ENCODE measurements at regions of chr4 and their contacts with region 1.

Region 1: DNA sequence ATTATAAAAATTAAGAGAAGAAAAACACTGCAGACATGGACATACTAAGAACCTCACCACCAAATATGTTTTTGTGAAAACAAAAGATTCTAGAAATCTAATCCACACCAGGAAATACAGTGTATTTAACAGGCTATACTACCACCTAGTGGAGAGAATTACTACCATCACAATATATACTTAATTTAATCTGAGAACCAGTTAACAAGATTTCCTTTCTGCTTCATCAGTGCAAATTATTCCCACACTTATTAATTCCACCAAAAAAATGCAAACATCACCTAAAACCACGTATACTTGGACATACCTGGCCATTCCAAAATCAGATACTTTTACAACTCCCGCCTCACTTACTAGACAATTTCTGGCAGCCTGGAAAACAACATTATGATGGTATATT is 7.0 kb upstream of the TXK start:
- DNase-seq: peak in 1 of 35 experiments; percentile 72
- ATAC-seq: peak in 1 of 4 experiments; percentile 20
- H3K4me3 ChIP-seq: no peak overlapping the region
- H3K4me3 Mint-ChIP-seq: no peak overlapping the region
- H3K27ac ChIP-seq: no peak overlapping the region
- H3K27ac Mint-ChIP-seq: no peak overlapping the region
- H3K4me1 ChIP-seq: peaks cover 39 to 46% of the 10 kb centered on the region in 2 experiments
- H3K4me1 Mint-ChIP-seq: peaks cover 50 to 53% (median 51%) of the 10 kb centered on the region in 3 donors
- H3K27me3 ChIP-seq: no peaks in the 10 kb centered on the region
- H3K27me3 Mint-ChIP-seq: no peaks in the 10 kb centered on the region

Region 2: GRCh38 chr4:47882228-47882627 is 258.8 kb before region 1 on chr4:
- CTCF ChIA-PET with region 1: no interaction called
- POLR2A ChIA-PET with region 1: interaction called in 1 of 2 experiments, 12 read pairs
- DNase-seq: no peak
- ATAC-seq: no peak
- H3K4me3 ChIP-seq: no peak overlapping the region
- H3K4me3 Mint-ChIP-seq: no peak overlapping the region
- H3K27ac ChIP-seq: no peak overlapping the region
- H3K27ac Mint-ChIP-seq: no peak overlapping the region
- H3K4me1 ChIP-seq: no peaks in the 10 kb centered on the region
- H3K4me1 Mint-ChIP-seq: peaks cover 0 to 6% (median 0%) of the 10 kb centered on the region in 3 donors
- H3K27me3 ChIP-seq: no peaks in the 10 kb centered on the region
- H3K27me3 Mint-ChIP-seq: no peaks in the 10 kb centered on the region

Region 3: DNA sequence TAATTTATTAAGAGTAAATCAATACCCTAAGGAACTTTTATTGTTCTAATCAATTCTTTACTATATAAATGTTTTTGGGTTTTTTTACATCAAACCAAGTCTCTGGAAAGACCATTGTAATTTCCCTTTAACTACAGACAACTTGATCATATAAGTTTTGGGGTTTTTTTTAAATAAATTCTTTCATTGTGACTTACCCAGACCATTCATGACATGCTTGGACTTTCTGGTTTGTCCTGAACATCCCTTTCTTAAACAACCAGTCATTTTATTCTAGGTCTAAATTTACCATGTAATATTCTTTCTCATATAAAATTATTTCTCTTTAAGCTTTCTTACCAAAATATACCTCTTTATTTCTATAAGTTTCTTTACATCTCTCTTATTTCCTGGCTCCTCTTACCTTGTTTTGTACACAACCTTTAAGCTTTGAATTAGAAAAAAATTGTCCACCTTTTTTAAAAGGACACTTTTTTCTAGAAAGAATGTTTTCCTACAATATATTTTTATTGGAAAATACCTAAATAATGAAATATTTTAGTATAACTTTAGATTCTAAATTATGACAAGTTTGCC is 132.9 kb before region 1 on chr4:
- CTCF ChIA-PET with region 1: interaction called in 1 of 2 experiments, 13 read pairs
- POLR2A ChIA-PET with region 1: no interaction called
- DNase-seq: no peak
- ATAC-seq: no peak
- H3K4me3 ChIP-seq: no peak overlapping the region
- H3K4me3 Mint-ChIP-seq: no peak overlapping the region
- H3K27ac ChIP-seq: no peak overlapping the region
- H3K27ac Mint-ChIP-seq: no peak overlapping the region
- H3K4me1 ChIP-seq: no peaks in the 10 kb centered on the region
- H3K4me1 Mint-ChIP-seq: no peaks in the 10 kb centered on the region
- H3K27me3 ChIP-seq: peaks cover 0 to 10% of the 10 kb centered on the region in 2 experiments
- H3K27me3 Mint-ChIP-seq: peaks cover 3 to 11% of the 10 kb centered on the region in 2 donors

Region 4: DNA sequence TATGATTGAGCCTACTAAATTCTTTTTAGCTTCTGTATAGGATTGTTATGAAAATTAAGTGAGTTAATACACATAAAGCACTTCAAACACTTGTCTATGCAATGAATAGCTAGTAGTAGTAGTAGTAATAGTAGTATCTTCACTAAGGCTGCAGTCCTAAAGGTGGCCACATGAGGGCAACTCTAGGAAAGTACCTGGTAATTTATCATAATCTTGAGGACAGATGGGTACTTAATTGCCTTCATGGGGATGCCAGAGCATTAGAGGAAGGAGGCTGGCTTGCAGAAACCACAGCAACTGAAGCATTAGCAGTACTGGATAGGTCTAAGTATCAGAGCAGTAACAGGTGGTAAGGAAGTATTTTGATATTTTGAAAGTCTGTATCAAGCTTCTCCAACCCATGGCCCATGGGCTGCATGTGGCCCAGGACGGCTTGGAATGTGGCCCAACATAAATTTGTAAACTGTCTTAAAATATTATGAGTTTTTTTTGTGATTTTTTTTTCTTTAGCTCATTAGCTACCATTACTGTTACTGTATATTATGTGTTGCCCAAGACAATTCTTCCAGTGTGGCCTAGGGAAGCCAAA is 107.1 kb before region 1 on chr4:
- CTCF ChIA-PET with region 1: interaction called, 3 to 23 read pairs
- POLR2A ChIA-PET with region 1: no interaction called
- DNase-seq: peak in 34 of 35 experiments; percentile 28 to 74 (median 53)
- ATAC-seq: peak; percentile 75 to 85 (median 82)
- H3K4me3 ChIP-seq: no peak overlapping the region
- H3K4me3 Mint-ChIP-seq: no peak overlapping the region
- H3K27ac ChIP-seq: no peak overlapping the region
- H3K27ac Mint-ChIP-seq: no peak overlapping the region
- H3K4me1 ChIP-seq: peaks cover 0 to 4% of the 10 kb centered on the region in 2 experiments
- H3K4me1 Mint-ChIP-seq: peaks cover 6 to 20% (median 12%) of the 10 kb centered on the region in 3 donors
- H3K27me3 ChIP-seq: no peaks in the 10 kb centered on the region
- H3K27me3 Mint-ChIP-seq: no peaks in the 10 kb centered on the region

Region 5: GRCh38 chr4:48100256-48100655 is 40.8 kb before region 1 on chr4:
- CTCF ChIA-PET with region 1: interaction called, 4 to 11 read pairs
- POLR2A ChIA-PET with region 1: no interaction called
- DNase-seq: no peak
- ATAC-seq: no peak
- H3K4me3 ChIP-seq: no peak overlapping the region
- H3K4me3 Mint-ChIP-seq: no peak overlapping the region
- H3K27ac ChIP-seq: no peak overlapping the region
- H3K27ac Mint-ChIP-seq: peak overlapping the region; percentile 22 to 31
- H3K4me1 ChIP-seq: peaks cover 2 to 3% of the 10 kb centered on the region in 2 experiments
- H3K4me1 Mint-ChIP-seq: peaks cover 18 to 27% (median 23%) of the 10 kb centered on the region in 3 donors
- H3K27me3 ChIP-seq: no peaks in the 10 kb centered on the region
- H3K27me3 Mint-ChIP-seq: no peaks in the 10 kb centered on the region

Region 6: DNA sequence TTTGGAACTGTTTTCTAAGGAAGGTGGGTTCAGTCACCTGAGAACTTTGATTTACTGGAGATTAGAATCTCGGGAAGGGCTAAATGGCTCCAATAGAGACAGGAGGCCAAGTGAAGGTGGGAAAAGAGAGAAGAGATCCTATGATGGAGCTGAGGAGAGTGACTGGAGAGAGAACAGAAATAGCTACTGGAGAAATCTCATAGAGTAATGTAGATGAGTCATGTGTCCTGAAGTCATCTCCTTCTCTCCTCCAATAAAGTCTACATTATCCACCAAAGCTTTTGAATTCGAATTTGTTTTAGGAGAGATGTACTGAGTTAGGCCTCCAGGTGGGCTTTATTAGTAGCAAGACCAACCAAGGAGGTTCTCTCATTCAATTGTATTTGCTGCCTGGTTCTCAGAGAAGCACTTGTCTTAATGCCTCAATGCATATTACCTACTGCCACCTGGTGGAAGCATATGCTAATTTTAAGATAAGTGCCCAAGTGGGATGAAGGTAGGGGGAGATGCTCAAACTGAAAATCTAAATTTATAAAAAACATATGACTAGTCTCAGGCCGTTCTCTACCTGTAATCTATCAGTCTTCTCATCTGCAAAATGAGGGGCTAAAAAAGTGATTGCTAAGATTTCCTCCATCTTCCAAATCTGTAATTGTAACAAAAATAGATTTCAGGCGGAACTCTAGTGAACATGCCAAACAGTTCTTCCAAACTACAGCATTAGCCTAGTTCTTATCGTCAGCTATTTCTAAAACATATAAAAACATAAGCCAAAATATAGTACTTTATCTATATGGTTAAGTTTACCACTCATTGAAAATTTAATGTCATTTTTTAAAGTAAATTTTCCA is 31.4 kb before region 1 on chr4:
- CTCF ChIA-PET with region 1: interaction called, 15 to 24 read pairs
- POLR2A ChIA-PET with region 1: interaction called in 1 of 2 experiments, 3 read pairs
- DNase-seq: peak in 8 of 35 experiments; percentile 16 to 73 (median 24)
- ATAC-seq: peak; percentile 73 to 82 (median 80)
- H3K4me3 ChIP-seq: no peak overlapping the region
- H3K4me3 Mint-ChIP-seq: no peak overlapping the region
- H3K27ac ChIP-seq: no peak overlapping the region
- H3K27ac Mint-ChIP-seq: peak overlapping the region; percentile 3 to 6
- H3K4me1 ChIP-seq: peaks cover 4 to 9% of the 10 kb centered on the region in 2 experiments
- H3K4me1 Mint-ChIP-seq: peaks cover 45 to 61% (median 47%) of the 10 kb centered on the region in 3 donors
- H3K27me3 ChIP-seq: no peaks in the 10 kb centered on the region
- H3K27me3 Mint-ChIP-seq: no peaks in the 10 kb centered on the region

Region 7: GRCh38 chr4:48127682-48128394 is 13.2 kb before region 1 on chr4:
- CTCF ChIA-PET with region 1: interaction called, 16 to 77 read pairs
- POLR2A ChIA-PET with region 1: interaction called, 3 to 7 read pairs
- DNase-seq: peak in 34 of 35 experiments; percentile 43 to 80 (median 64)
- ATAC-seq: peak; percentile 64 to 88 (median 72)
- H3K4me3 ChIP-seq: peak overlapping the region; percentile 6 to 42
- H3K4me3 Mint-ChIP-seq: peak overlapping the region; percentile 73 to 88 (median 76)
- H3K27ac ChIP-seq: peak overlapping the region; percentile 80
- H3K27ac Mint-ChIP-seq: peak overlapping the region; percentile 98 to 99
- H3K4me1 ChIP-seq: peaks cover 63 to 68% of the 10 kb centered on the region in 2 experiments
- H3K4me1 Mint-ChIP-seq: peaks cover 90 to 93% (median 92%) of the 10 kb centered on the region in 3 donors
- H3K27me3 ChIP-seq: no peaks in the 10 kb centered on the region
- H3K27me3 Mint-ChIP-seq: no peaks in the 10 kb centered on the region

Region 8: DNA sequence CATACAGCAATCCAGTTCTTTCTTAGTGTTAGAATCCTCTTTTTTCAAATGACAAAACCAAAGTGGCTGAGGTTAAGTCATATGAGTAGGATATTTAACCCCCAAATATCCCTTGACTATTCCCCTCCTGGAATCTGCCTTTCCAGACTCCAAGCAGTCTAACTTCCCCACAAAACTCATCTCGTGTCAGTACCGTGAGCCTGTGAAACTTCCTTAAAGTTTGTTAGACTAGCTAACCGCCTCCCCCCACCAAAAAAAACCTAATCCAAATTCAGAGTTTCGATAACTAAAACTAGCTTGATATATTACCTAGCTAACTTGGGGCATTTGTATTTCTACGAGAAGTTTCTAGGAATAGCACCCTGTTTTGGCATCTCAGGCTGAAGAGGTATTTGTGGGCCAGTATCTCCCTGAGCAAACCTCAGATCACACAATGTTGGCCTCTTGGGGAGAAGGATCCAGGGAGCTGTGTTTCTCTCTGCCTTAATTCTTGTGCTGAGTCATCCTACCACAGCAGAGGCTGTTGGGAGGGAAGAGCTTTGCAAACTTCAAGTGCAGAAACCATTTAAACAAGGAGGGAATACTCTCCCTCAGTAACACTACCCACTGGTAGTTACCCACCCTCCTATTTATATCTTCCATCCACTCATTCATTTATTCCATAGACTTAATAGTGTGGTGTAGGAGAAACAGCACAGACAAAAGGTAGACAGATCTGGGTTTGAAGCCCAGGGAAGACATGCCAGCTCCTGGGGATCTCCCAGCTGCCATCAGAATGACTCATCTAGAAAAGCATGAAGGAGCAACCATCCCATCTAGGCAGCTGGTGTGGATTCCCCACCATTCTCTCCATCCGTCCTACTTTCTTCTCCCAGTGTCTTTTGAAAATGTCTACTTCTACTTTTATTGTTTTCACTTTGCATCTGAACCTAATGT is 32.3 kb after region 1 on chr4:
- CTCF ChIA-PET with region 1: no interaction called
- POLR2A ChIA-PET with region 1: no interaction called
- DNase-seq: no peak
- ATAC-seq: no peak
- H3K4me3 ChIP-seq: no peak overlapping the region
- H3K4me3 Mint-ChIP-seq: no peak overlapping the region
- H3K27ac ChIP-seq: no peak overlapping the region
- H3K27ac Mint-ChIP-seq: no peak overlapping the region
- H3K4me1 ChIP-seq: no peaks in the 10 kb centered on the region
- H3K4me1 Mint-ChIP-seq: no peaks in the 10 kb centered on the region
- H3K27me3 ChIP-seq: no peaks in the 10 kb centered on the region
- H3K27me3 Mint-ChIP-seq: no peaks in the 10 kb centered on the region

Measured in T-cell (primary cell).